Endothelial cell of umbilical vein (primary cell): ENCODE measurements at regions of chr14 and their contacts with region 1.

Region 1: GRCh38 chr14:54627540-54628363 is 60.8 kb downstream of the SAMD4A start:
- DNase-seq: peak; percentile 88
- H3K4me3 ChIP-seq: peak overlapping the region; percentile 11 to 57 (median 19)
- H3K27ac ChIP-seq: peak overlapping the region; percentile 97
- H3K4me1 ChIP-seq: peaks cover 63% of the 10 kb centered on the region
- H3K27me3 ChIP-seq: no peaks in the 10 kb centered on the region
- CTCF ChIP-seq: no peak
- POLR2A ChIP-seq: no peak

Region 2: DNA sequence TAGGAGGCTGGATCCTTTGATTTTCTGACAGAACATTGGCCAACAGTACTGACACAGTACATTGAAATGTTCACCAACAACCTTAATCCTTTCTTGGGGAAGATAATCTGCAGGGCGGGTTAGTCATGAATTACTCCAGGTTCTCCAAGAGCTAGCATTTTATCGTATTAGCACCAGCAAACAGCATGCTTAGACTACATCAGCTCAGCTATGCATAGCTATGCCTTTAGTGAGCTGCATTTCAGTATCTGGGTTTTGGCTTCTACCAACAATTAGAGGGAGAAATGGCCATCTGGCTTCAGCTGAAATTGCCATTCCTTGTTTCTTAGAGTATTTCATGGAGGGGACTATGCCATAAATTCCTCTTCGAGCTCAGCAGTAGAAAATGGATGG is 27.0 kb before region 1 on chr14:
- CTCF ChIA-PET with region 1: interaction called, 12 read pairs
- POLR2A ChIA-PET with region 1: no interaction called
- dilution Hi-C with region 1: no loop called
- intact Hi-C with region 1: no loop called
- DNase-seq: no peak
- H3K4me3 ChIP-seq: no peak overlapping the region
- H3K27ac ChIP-seq: no peak overlapping the region
- H3K4me1 ChIP-seq: peaks cover 31% of the 10 kb centered on the region
- H3K27me3 ChIP-seq: no peaks in the 10 kb centered on the region
- CTCF ChIP-seq: no peak
- POLR2A ChIP-seq: no peak